Transverse colon (tissue), 4 donors: ENCODE measurements at regions of chr5 and their contacts with region 1.

Region 1: DNA sequence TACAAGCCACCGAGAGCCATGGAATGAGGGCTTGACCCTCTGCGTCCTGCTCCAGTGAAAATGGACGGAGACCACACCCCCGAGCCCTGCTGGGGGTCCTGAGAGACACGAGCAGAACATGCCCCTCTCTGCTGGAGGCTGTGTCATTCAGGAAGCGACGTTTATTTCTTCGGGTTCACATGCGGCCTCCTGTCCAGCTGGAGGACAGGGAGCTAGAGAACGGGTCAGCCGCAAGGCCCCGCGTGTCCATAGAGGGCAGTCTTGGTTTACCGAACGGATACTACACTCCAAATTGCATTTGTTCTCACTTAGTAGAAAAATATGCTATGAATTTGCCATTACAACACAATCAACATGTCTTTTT is 36.1 kb downstream of the MRPL36 start:
- DNase-seq: peak; percentile 31
- H3K4me3 ChIP-seq: no peak overlapping the region
- H3K27ac ChIP-seq: no peak overlapping the region
- H3K4me1 ChIP-seq: no peaks in the 10 kb centered on the region
- H3K27me3 ChIP-seq: peaks cover 20% of the 10 kb centered on the region
- CTCF ChIP-seq: peak; percentile 21 to 50 (median 43)
- EP300 ChIP-seq: no peak
- POLR2A ChIP-seq: no peak

Region 2: DNA sequence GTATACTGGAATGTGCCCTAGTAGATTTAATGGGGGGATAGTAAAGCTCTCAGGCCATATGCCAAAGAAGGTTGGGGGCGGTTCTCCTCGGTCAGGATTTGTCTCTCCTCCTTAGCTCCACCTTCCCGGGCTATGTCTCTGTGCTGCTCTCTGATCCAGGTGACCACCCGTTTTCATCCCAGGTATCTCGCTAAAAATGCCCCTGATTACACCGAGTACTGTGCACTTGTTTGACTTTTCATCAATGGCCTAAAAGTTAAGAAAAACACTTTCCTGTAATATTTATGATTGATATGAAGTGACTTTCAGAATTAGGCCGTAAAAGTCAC is 38.4 kb after region 1 on chr5:
- in situ Hi-C with region 1: no loop called
- intact Hi-C with region 1: no loop called
- DNase-seq: no peak
- H3K4me3 ChIP-seq: peak overlapping the region; percentile 65 to 94 (median 80)
- H3K27ac ChIP-seq: peak overlapping the region; percentile 84 to 90 (median 88)
- H3K4me1 ChIP-seq: peaks cover 12 to 38% (median 21%) of the 10 kb centered on the region in 4 donors
- H3K27me3 ChIP-seq: no peaks in the 10 kb centered on the region
- CTCF ChIP-seq: no peak
- EP300 ChIP-seq: no peak
- POLR2A ChIP-seq: no peak

Region 3: GRCh38 chr5:1815952-1816292 is 52.4 kb after region 1 on chr5:
- in situ Hi-C with region 1: no loop called
- intact Hi-C with region 1: no loop called
- DNase-seq: no peak
- H3K4me3 ChIP-seq: no peak overlapping the region
- H3K27ac ChIP-seq: no peak overlapping the region
- H3K4me1 ChIP-seq: no peaks in the 10 kb centered on the region
- H3K27me3 ChIP-seq: no peaks in the 10 kb centered on the region
- CTCF ChIP-seq: no peak
- EP300 ChIP-seq: no peak
- POLR2A ChIP-seq: no peak

Region 4: DNA sequence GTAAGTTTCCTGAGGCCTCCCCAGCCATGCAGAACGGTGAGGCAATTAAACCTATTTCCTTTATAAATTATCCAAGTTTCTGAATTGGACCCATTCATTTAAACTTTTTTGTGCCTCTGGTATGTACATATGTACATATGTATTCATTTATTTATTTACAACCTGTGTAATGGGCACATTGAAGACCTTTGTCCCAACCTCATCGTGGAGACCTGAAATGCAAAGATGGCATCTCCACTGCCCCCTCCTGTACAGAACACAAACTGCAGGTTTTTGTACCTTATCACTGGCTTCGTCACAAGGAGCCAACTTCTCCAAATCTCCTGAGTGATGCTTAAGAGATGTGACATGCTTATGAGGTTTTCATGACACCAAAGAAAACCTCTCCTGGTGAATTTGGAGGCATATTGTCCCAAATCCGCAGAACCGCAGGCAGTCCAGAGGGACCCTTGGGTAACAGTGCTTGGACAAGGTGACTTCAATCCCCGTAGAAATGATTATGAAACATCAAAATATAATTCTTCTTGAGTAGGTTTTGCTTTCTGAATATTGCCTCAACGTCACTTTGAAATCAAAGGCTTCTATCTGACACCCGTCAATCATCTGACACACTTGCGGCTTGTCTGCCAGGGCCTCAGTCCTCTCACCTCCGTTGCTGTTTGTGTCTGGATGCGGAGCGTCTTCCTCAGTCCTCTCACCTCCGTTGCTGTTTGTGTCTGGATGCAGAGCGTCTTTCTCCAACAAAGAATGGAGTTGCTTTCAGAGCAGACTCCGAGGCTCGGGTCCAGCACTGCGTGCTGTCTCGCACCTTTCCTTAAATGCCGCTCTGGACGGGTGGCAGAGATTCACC is 254.2 kb after region 1 on chr5:
- in situ Hi-C with region 1: loop called in 2 of 4 experiments (anchors 25 kb)
- intact Hi-C with region 1: no loop called
- DNase-seq: no peak
- H3K4me3 ChIP-seq: no peak overlapping the region
- H3K27ac ChIP-seq: no peak overlapping the region
- H3K4me1 ChIP-seq: no peaks in the 10 kb centered on the region
- H3K27me3 ChIP-seq: no peaks in the 10 kb centered on the region
- CTCF ChIP-seq: peak; percentile 14 to 31 (median 29)
- EP300 ChIP-seq: no peak
- POLR2A ChIP-seq: no peak